ENCODE measurements at regions of chr15 and their contacts with region 1.

Region 1: GRCh38 chr15:91852741-91853510 is 582 bp upstream of the SLCO3A1 start:
- DNase-seq: peak; percentile 72
- H3K4me3 Mint-ChIP-seq: peak overlapping the region; percentile 83
- H3K27ac Mint-ChIP-seq: peak overlapping the region; percentile 87
- H3K4me1 Mint-ChIP-seq: peaks cover 59% of the 10 kb centered on the region
- H3K27me3 Mint-ChIP-seq: peaks cover 5% of the 10 kb centered on the region

Region 2: DNA sequence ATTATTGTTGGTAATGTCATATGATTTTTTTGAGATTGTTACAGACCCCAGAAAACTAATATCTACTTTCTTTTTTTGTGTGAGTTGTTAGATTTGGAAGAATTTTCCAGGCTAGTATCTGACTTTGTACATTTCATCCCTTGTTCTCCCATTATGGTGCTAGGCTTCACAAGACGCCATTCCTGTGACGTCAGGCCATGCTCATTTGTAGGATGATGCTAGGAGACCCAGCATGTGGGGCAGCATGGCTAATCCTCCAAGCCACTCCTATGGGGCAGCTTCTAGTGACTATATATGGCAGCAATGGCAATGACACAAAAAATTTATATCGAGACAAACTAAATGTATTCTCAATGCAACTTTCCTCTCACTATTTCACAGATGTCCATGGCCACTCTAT is 121.4 kb before region 1 on chr15:
- CTCF ChIA-PET with region 1: no interaction called
- POLR2A ChIA-PET with region 1: no interaction called
- DNase-seq: no peak
- H3K4me3 Mint-ChIP-seq: no peak overlapping the region
- H3K27ac Mint-ChIP-seq: no peak overlapping the region
- H3K4me1 Mint-ChIP-seq: no peaks in the 10 kb centered on the region
- H3K27me3 Mint-ChIP-seq: peaks cover 31% of the 10 kb centered on the region

Region 3: GRCh38 chr15:91867581-91868026 is 14.7 kb after region 1 on chr15:
- CTCF ChIA-PET with region 1: interaction called, 11 read pairs
- POLR2A ChIA-PET with region 1: interaction called, 4 read pairs
- DNase-seq: no peak
- H3K4me3 Mint-ChIP-seq: no peak overlapping the region
- H3K27ac Mint-ChIP-seq: peak overlapping the region; percentile 9
- H3K4me1 Mint-ChIP-seq: peaks cover 86% of the 10 kb centered on the region
- H3K27me3 Mint-ChIP-seq: peaks cover 1% of the 10 kb centered on the region

Region 4: GRCh38 chr15:92077353-92078085 is 224.6 kb after region 1 on chr15:
- CTCF ChIA-PET with region 1: interaction called, 12 read pairs
- POLR2A ChIA-PET with region 1: no interaction called
- DNase-seq: peak; percentile 73
- H3K4me3 Mint-ChIP-seq: no peak overlapping the region
- H3K27ac Mint-ChIP-seq: no peak overlapping the region
- H3K4me1 Mint-ChIP-seq: peaks cover 33% of the 10 kb centered on the region
- H3K27me3 Mint-ChIP-seq: no peaks in the 10 kb centered on the region